CD8-positive, alpha-beta T cell (primary cell): ENCODE measurements at regions of chr18 and their contacts with region 1.

Region 1: DNA sequence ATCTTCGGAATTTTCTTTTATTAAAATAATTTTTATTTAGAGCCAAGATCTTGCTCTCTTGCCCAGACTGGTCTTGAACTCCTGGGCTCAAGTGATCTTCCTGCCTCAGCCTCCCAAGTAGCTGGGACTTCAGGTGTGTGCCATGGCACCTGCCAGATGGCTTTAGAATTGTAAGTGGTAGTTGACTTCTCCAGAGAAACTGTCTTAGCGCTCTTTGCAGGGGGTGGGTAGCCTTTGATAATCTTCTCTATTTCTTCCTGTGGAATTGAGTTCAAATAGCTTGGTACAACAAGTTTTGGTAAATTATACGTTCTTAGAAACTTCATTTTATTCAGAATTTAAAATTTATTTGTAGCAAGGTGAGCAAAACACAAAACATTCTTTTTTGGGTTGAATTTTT is 113.3 kb downstream of the LDLRAD4 start:
- DNase-seq: no peak
- ATAC-seq: no peak
- H3K4me3 ChIP-seq: no peak overlapping the region
- H3K4me3 Mint-ChIP-seq: no peak overlapping the region
- H3K27ac ChIP-seq: no peak overlapping the region
- H3K27ac Mint-ChIP-seq: no peak overlapping the region
- H3K4me1 ChIP-seq: no peaks in the 10 kb centered on the region
- H3K4me1 Mint-ChIP-seq: peaks cover 26% of the 10 kb centered on the region
- H3K27me3 ChIP-seq: no peaks in the 10 kb centered on the region
- H3K27me3 Mint-ChIP-seq: no peaks in the 10 kb centered on the region
- CTCF ChIP-seq: no peak

Region 2: DNA sequence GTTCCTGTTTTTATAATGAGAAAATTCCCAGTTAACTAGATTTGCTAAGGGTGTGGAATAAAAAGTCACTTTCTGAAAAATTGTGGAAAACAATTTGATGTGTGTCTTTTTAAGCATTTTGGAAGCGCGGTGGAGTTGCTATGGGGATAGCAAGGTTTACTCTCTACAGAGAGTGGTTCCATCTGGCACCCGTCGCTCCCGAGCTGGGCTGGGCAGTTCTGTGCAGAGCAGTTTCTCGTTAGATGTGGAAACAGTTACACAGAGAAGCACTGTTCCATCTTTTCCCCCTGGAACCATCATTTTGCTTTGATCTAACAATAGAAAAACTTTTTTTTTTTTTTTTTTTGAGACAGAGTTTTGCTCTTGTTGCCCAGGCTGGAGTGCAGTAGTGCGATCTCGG is 95.9 kb before region 1 on chr18:
- CTCF ChIA-PET with region 1: no interaction called
- POLR2A ChIA-PET with region 1: no interaction called
- intact Hi-C with region 1: no loop called
- DNase-seq: peak in 1 of 9 experiments; percentile 25
- ATAC-seq: no peak
- H3K4me3 ChIP-seq: no peak overlapping the region
- H3K4me3 Mint-ChIP-seq: no peak overlapping the region
- H3K27ac ChIP-seq: no peak overlapping the region
- H3K27ac Mint-ChIP-seq: peak overlapping the region; percentile 32
- H3K4me1 ChIP-seq: no peaks in the 10 kb centered on the region
- H3K4me1 Mint-ChIP-seq: peaks cover 2% of the 10 kb centered on the region
- H3K27me3 ChIP-seq: no peaks in the 10 kb centered on the region
- H3K27me3 Mint-ChIP-seq: no peaks in the 10 kb centered on the region
- CTCF ChIP-seq: no peak

Region 3: GRCh38 chr18:13353084-13353823 is 21.4 kb after region 1 on chr18:
- CTCF ChIA-PET with region 1: no interaction called
- POLR2A ChIA-PET with region 1: interaction called, 8 read pairs
- intact Hi-C with region 1: loop called in 1 of 2 experiments (anchors 1 kb)
- DNase-seq: peak in 2 of 9 experiments; percentile 45 to 53
- ATAC-seq: peak; percentile 55
- H3K4me3 ChIP-seq: no peak overlapping the region
- H3K4me3 Mint-ChIP-seq: peak overlapping the region; percentile 15
- H3K27ac ChIP-seq: peak overlapping the region in 1 of 2 experiments; percentile 36
- H3K27ac Mint-ChIP-seq: peak overlapping the region; percentile 92
- H3K4me1 ChIP-seq: peaks cover 12% of the 10 kb centered on the region
- H3K4me1 Mint-ChIP-seq: peaks cover 27% of the 10 kb centered on the region
- H3K27me3 ChIP-seq: no peaks in the 10 kb centered on the region
- H3K27me3 Mint-ChIP-seq: no peaks in the 10 kb centered on the region
- CTCF ChIP-seq: no peak